Dendritic cell treated with granulocyte-macrophage colony-stimulating factor and Interleukin-4, amounts not matched to agents 40 ng/mL and 50 ng/mL, for 4 days (primary cell): ENCODE measurements at regions of chr16 and their contacts with region 1.

Region 1: DNA sequence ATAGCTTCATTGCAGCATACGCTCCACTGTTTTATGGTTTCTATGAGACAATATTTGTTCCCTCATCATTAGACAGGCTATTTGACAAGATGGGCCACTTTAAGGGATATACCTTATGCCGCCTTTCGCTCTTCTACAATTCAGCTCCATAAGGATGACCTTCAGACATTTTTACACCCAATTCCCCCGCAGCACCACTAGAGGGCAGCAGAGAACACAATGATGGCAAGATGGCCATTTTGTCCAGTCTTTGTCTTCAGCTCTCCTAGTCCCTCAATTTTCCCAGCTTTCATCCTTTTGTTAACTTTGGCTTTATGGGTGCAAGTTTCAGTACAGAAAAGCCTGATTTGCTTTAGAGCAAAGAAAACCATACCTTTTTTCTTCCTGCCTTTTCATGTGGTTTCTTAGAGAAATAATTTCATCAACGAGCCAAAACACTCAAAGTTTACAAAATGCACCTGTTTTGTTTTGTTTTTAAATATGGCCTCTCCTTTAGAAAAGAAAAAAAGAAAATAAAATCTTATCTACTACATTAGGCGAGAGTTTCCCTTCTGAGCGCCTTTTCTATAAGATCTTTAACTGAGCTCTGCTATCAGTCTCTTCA is 355.3 kb downstream of the TOX3 start:
- H3K4me3 Mint-ChIP-seq: no peak overlapping the region
- H3K27ac Mint-ChIP-seq: no peak overlapping the region
- H3K4me1 Mint-ChIP-seq: no peaks in the 10 kb centered on the region
- H3K27me3 Mint-ChIP-seq: no peaks in the 10 kb centered on the region

Region 2: GRCh38 chr16:52408191-52408845 is 216.7 kb after region 1 on chr16:
- intact Hi-C with region 1: no loop called
- H3K4me3 Mint-ChIP-seq: no peak overlapping the region
- H3K27ac Mint-ChIP-seq: no peak overlapping the region
- H3K4me1 Mint-ChIP-seq: no peaks in the 10 kb centered on the region
- H3K27me3 Mint-ChIP-seq: no peaks in the 10 kb centered on the region

Region 3: GRCh38 chr16:52861614-52862022 is 670.0 kb after region 1 on chr16:
- intact Hi-C with region 1: loop called (anchors 5 kb)
- H3K4me3 Mint-ChIP-seq: no peak overlapping the region
- H3K27ac Mint-ChIP-seq: no peak overlapping the region
- H3K4me1 Mint-ChIP-seq: no peaks in the 10 kb centered on the region
- H3K27me3 Mint-ChIP-seq: no peaks in the 10 kb centered on the region

Region 4: GRCh38 chr16:52912565-52913173 is 721.0 kb after region 1 on chr16:
- intact Hi-C with region 1: loop called (anchors 1 kb)
- H3K4me3 Mint-ChIP-seq: no peak overlapping the region
- H3K27ac Mint-ChIP-seq: no peak overlapping the region
- H3K4me1 Mint-ChIP-seq: no peaks in the 10 kb centered on the region
- H3K27me3 Mint-ChIP-seq: no peaks in the 10 kb centered on the region

Region 5: GRCh38 chr16:53022374-53022773 is 830.7 kb after region 1 on chr16:
- intact Hi-C with region 1: loop called (anchors 1 kb)
- H3K4me3 Mint-ChIP-seq: no peak overlapping the region
- H3K27ac Mint-ChIP-seq: no peak overlapping the region
- H3K4me1 Mint-ChIP-seq: peaks cover 17% of the 10 kb centered on the region
- H3K27me3 Mint-ChIP-seq: peaks cover under 1% of the 10 kb centered on the region